IMR-90 (cell line): ENCODE measurements at regions of chr7 and their contacts with region 1.

Region 1: GRCh38 chr7:151057989-151058780 is 488 bp upstream of the CDK5 start:
- DNase-seq: peak; percentile 100
- ATAC-seq: peak; percentile 86
- H3K4me3 ChIP-seq: peak overlapping the region; percentile 38
- H3K27ac ChIP-seq: peak overlapping the region; percentile 91
- H3K4me1 ChIP-seq: peaks cover 40% of the 10 kb centered on the region
- H3K27me3 ChIP-seq: no peaks in the 10 kb centered on the region
- CTCF ChIP-seq: no peak
- POLR2A ChIP-seq: no peak; the same call in 1 of the 2 replicates
- RAD21 ChIP-seq: no peak

Region 2: GRCh38 chr7:151068068-151068773 is 10.0 kb after region 1 on chr7:
- CTCF ChIA-PET with region 1: no interaction called
- POLR2A ChIA-PET with region 1: no interaction called
- dilution Hi-C with region 1: no loop called
- in situ Hi-C with region 1: no loop called
- intact Hi-C with region 1: loop called (anchors 1 kb)
- DNase-seq: peak; percentile 74
- ATAC-seq: peak; percentile 79
- H3K4me3 ChIP-seq: no peak overlapping the region
- H3K27ac ChIP-seq: peak overlapping the region; percentile 17; the same call in 1 of the 2 replicates
- H3K4me1 ChIP-seq: peaks cover 9% of the 10 kb centered on the region
- H3K27me3 ChIP-seq: no peaks in the 10 kb centered on the region
- CTCF ChIP-seq: no peak
- POLR2A ChIP-seq: no peak
- RAD21 ChIP-seq: no peak

Region 3: GRCh38 chr7:151080522-151081169 is 22.5 kb after region 1 on chr7 and contains the start of gene FASTK:
- CTCF ChIA-PET with region 1: no interaction called
- POLR2A ChIA-PET with region 1: interaction called, 5 read pairs
- dilution Hi-C with region 1: no loop called
- in situ Hi-C with region 1: no loop called
- intact Hi-C with region 1: loop called (anchors 2 kb)
- DNase-seq: peak; percentile 88
- ATAC-seq: peak; percentile 78
- H3K4me3 ChIP-seq: peak within 1 kb of the TSS; percentile 95
- H3K27ac ChIP-seq: peak within 1 kb of the TSS; percentile 84
- H3K4me1 ChIP-seq: peaks cover 25% of the 10 kb centered on the region
- H3K27me3 ChIP-seq: no peaks in the 10 kb centered on the region
- CTCF ChIP-seq: no peak
- POLR2A ChIP-seq: peak; percentile 79
- RAD21 ChIP-seq: no peak
- total RNA-seq, gene FASTK: 41.9 and 53.8 TPM in 2 replicates